Naive thymus-derived CD4-positive, alpha-beta T cell (primary cell): ENCODE measurements at regions of chr6 and their contacts with region 1.

Region 1: DNA sequence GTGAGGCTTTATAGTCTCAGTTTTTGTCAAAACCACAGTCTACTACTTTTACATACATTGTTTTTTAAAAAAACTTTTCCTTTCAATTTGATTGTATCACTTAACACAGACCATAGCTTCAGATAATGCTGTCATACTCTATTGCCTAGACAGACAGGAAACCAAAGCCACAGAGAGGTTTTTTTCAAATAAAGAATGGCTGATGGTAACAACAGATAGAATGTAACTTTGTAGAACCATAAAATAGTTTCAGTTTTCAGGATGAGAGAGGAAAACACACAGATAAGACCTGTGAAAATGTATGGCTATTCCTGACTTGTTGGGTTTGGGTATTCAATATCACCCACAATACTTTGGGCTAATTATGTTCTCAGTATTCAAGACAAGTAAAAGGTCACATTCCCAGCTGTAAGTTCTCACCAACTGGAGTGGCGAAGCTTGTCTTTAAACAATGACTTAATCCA is 94.0 kb downstream of the ADGRG6 start:
- DNase-seq: peak in 7 of 9 donors; percentile 72 to 90 (median 88)
- ATAC-seq: peak; percentile 97
- H3K4me3 ChIP-seq: peak overlapping the region; percentile 30
- H3K4me3 Mint-ChIP-seq: peak overlapping the region in 9 of 10 donors; percentile 47 to 78 (median 69)
- H3K27ac ChIP-seq: peak overlapping the region; percentile 80
- H3K27ac Mint-ChIP-seq: peak overlapping the region; percentile 9 to 99 (median 97)
- H3K4me1 ChIP-seq: peaks cover 9 to 33% of the 10 kb centered on the region in 2 donors
- H3K4me1 Mint-ChIP-seq: peaks cover 10 to 76% (median 61%) of the 10 kb centered on the region in 7 donors
- H3K27me3 ChIP-seq: no peaks in the 10 kb centered on the region
- H3K27me3 Mint-ChIP-seq: peaks cover 0 to 58% (median 0%) of the 10 kb centered on the region in 5 donors

Region 2: DNA sequence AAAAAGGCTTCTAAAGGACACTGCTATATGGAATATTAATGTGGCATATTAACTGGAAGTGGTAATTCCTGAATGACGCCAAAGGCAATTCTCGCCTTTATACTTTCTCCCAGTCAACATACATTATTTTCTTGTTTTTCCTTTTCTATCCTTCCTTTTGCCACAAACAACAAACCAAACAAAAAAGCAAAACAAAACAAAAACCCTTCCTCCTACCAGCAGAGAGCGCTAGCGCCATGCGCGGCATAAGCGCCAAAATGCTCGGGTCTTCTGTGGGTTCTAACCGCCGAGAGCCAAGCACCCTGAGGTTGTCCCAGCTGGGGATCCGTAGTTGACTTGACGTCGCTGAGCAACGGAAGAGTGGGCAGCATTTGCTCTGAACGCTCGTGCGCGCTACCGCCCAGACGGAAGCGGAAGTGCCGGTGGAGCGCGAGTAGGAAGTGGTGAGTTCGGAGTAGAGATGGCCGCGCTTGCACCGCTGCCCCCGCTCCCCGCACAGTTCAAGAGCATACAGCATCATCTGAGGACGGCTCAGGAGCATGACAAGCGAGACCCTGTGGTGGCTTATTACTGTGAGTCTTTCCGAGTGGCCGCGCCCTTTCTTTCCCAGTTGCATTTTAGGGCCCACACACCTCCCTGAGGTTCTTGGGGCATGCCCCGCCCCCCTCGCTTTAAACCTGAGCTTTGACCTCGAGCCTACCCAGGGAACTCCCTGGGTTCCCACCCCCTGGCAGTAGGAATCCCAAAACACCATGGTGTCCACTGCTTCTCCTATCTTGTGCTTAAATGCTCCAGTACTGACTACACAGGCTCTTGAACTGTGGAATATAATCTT is 248.8 kb before region 1 on chr6 and contains the starts of genes NMBR and VTA1:
- CTCF ChIA-PET with region 1: interaction called, 5 read pairs
- POLR2A ChIA-PET with region 1: interaction called, 4 read pairs
- intact Hi-C with region 1: loop called in 1 of 2 experiments (anchors 1 kb)
- DNase-seq: peak; percentile 81 to 98 (median 97)
- ATAC-seq: peak; percentile 99
- H3K4me3 ChIP-seq: peak within 1 kb of the TSS; percentile 95
- H3K4me3 Mint-ChIP-seq: peak within 1 kb of the TSS; percentile 88 to 98 (median 95)
- H3K27ac ChIP-seq: peak within 1 kb of the TSS; percentile 75
- H3K27ac Mint-ChIP-seq: peak within 1 kb of the TSS; percentile 80 to 98 (median 94)
- H3K4me1 ChIP-seq: peaks cover 22 to 25% of the 10 kb centered on the region in 2 donors
- H3K4me1 Mint-ChIP-seq: peaks cover 36 to 73% (median 65%) of the 10 kb centered on the region in 7 donors
- H3K27me3 ChIP-seq: no peaks in the 10 kb centered on the region
- H3K27me3 Mint-ChIP-seq: peaks cover 0 to 2% (median 0%) of the 10 kb centered on the region in 5 donors
- total RNA-seq, gene NMBR: not detected
- total RNA-seq, gene VTA1: 13.6 to 41.3 (median 32.6) TPM

Region 3: GRCh38 chr6:142429195-142429594 is 33.4 kb after region 1 on chr6:
- CTCF ChIA-PET with region 1: no interaction called
- POLR2A ChIA-PET with region 1: no interaction called
- intact Hi-C with region 1: no loop called
- DNase-seq: no peak
- ATAC-seq: no peak
- H3K4me3 ChIP-seq: no peak overlapping the region
- H3K4me3 Mint-ChIP-seq: no peak overlapping the region
- H3K27ac ChIP-seq: no peak overlapping the region
- H3K27ac Mint-ChIP-seq: no peak overlapping the region
- H3K4me1 ChIP-seq: no peaks in the 10 kb centered on the region
- H3K4me1 Mint-ChIP-seq: no peaks in the 10 kb centered on the region
- H3K27me3 ChIP-seq: no peaks in the 10 kb centered on the region
- H3K27me3 Mint-ChIP-seq: peaks cover 0 to 5% (median 0%) of the 10 kb centered on the region in 5 donors

Region 4: GRCh38 chr6:142444881-142445301 is 49.1 kb after region 1 on chr6:
- CTCF ChIA-PET with region 1: no interaction called
- POLR2A ChIA-PET with region 1: no interaction called
- intact Hi-C with region 1: loop called in 1 of 2 experiments (anchors 5 kb)
- DNase-seq: no peak
- ATAC-seq: no peak
- H3K4me3 ChIP-seq: no peak overlapping the region
- H3K4me3 Mint-ChIP-seq: no peak overlapping the region
- H3K27ac ChIP-seq: no peak overlapping the region
- H3K27ac Mint-ChIP-seq: no peak overlapping the region
- H3K4me1 ChIP-seq: no peaks in the 10 kb centered on the region
- H3K4me1 Mint-ChIP-seq: no peaks in the 10 kb centered on the region
- H3K27me3 ChIP-seq: no peaks in the 10 kb centered on the region
- H3K27me3 Mint-ChIP-seq: peaks cover 0 to 9% (median 0%) of the 10 kb centered on the region in 5 donors

Region 5: DNA sequence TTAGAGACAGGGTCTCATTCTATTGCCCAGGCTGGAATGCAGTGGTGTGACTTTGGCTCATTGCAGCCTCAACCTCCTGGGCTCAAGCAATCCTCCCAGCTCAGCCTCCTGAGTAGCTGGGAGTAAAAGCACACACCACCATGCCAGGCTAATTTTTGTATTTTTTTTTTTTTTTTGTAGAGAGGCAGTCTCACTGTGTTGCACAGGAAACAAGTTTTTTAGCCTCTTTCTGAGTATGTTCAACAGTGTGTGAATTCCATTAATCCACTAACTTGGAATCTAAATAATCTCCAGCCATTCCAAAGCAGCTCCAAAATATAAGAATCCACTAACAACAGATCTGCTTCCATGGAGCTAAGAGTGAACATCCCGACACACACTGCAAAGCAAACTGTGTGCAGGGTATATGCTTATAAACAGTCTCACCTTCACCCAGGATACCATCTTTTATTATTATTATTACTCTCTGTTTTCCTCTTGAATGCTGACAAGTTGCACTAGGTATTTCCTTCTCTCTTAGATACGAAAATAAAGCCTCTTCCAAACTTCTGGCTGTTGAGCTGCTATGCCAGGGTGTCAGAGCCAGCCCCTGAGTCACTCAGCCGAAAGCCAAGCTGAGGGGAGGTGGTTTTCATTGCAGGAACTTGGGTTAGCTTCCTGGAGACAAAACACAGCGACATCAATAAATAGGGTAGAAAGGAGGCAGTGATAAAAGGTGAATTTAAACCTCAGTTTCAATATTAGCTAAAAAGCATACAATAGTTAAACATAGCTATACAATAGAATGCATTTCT is 284.3 kb after region 1 on chr6:
- CTCF ChIA-PET with region 1: no interaction called
- POLR2A ChIA-PET with region 1: no interaction called
- intact Hi-C with region 1: loop called (anchors 5 kb)
- DNase-seq: peak in 6 of 9 donors; percentile 24 to 59 (median 44)
- ATAC-seq: peak; percentile 85
- H3K4me3 ChIP-seq: no peak overlapping the region
- H3K4me3 Mint-ChIP-seq: peak overlapping the region in 9 of 10 donors; percentile 54 to 85 (median 74)
- H3K27ac ChIP-seq: no peak overlapping the region
- H3K27ac Mint-ChIP-seq: peak overlapping the region in 8 of 9 donors; percentile 14 to 94 (median 76)
- H3K4me1 ChIP-seq: peaks cover 0 to 27% of the 10 kb centered on the region in 2 donors
- H3K4me1 Mint-ChIP-seq: peaks cover 6 to 64% (median 55%) of the 10 kb centered on the region in 7 donors
- H3K27me3 ChIP-seq: no peaks in the 10 kb centered on the region
- H3K27me3 Mint-ChIP-seq: no peaks in the 10 kb centered on the region

Region 6: DNA sequence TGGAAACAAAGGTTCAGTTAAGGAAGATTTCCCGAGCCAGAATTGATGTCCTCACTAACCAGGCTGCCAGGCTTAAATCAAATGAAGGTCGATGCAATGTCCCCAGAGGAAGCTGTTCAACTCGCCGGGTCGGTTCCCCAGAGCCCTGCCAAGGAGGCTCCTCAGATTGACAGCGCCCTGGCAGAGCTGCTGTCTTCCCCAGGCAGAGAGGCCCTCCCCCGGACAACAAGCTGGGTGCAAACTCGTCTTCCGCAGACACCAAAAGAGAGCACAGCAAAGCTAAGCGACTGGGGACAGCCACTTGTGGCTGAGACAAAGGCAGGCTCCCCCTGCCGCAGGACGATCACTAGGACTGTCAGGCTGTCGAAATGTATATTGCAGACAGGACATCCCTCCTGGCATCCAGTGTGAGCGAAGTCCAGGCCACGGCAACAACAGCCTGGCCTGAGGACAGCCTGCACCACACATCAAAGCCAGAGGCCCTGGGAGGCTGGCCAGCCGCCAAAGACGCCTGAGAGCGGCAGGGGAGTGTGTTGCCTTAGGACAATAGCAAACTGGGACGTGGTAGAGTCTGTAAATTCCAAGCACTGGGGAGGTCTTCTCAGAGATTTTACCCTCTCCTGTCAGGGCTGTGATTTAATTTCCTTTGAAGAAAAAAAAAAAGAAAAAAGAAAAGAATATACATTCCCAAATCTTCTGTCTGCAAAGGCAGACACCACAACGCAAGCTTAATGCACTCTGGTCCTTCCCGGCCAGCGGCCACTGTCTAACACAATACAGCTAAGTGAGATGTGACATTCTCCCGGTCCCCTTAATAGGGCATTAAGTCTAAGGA is 450.0 kb after region 1 on chr6:
- CTCF ChIA-PET with region 1: no interaction called
- POLR2A ChIA-PET with region 1: no interaction called
- intact Hi-C with region 1: loop called in 1 of 2 experiments (anchors 5 kb)
- DNase-seq: peak; percentile 27 to 70 (median 63)
- ATAC-seq: peak; percentile 72
- H3K4me3 ChIP-seq: peak overlapping the region; percentile 44
- H3K4me3 Mint-ChIP-seq: peak overlapping the region; percentile 84 to 93 (median 86)
- H3K27ac ChIP-seq: peak overlapping the region; percentile 84
- H3K27ac Mint-ChIP-seq: peak overlapping the region; percentile 91 to 100 (median 95)
- H3K4me1 ChIP-seq: peaks cover 69 to 74% of the 10 kb centered on the region in 2 donors
- H3K4me1 Mint-ChIP-seq: peaks cover 49 to 99% (median 86%) of the 10 kb centered on the region in 7 donors
- H3K27me3 ChIP-seq: no peaks in the 10 kb centered on the region
- H3K27me3 Mint-ChIP-seq: no peaks in the 10 kb centered on the region

Region 7: DNA sequence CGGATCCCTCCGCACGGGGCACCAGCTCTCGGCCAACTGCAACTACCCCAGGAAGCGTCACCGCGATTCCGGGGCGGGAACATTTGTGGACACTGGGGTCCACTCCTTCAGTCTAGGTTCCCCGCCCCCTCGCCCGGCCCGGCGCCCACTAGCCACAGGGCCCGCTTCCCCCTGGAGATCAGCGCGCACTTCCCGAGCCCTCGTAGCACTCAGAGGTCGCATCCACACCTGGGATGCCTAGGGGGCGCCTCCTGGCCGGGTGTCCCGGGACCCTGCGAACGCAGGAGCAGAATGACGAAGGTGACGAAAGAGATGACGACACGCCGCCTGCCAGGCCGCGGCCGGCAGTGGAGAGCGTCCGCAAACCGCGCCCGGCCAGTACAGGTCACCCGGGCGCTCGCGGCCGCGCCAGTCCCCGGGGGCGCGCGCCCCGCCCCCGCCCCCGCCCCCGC is 664.6 kb after region 1 on chr6:
- CTCF ChIA-PET with region 1: no interaction called
- POLR2A ChIA-PET with region 1: no interaction called
- intact Hi-C with region 1: loop called (anchors 5 kb)
- DNase-seq: peak; percentile 63 to 82 (median 72)
- ATAC-seq: peak; percentile 85
- H3K4me3 ChIP-seq: peak overlapping the region; percentile 73
- H3K4me3 Mint-ChIP-seq: peak overlapping the region; percentile 88 to 98 (median 94)
- H3K27ac ChIP-seq: peak overlapping the region; percentile 79
- H3K27ac Mint-ChIP-seq: peak overlapping the region; percentile 92 to 98 (median 96)
- H3K4me1 ChIP-seq: peaks cover 8% of the 10 kb centered on the region in 2 donors
- H3K4me1 Mint-ChIP-seq: peaks cover 16 to 34% (median 28%) of the 10 kb centered on the region in 7 donors
- H3K27me3 ChIP-seq: no peaks in the 10 kb centered on the region
- H3K27me3 Mint-ChIP-seq: no peaks in the 10 kb centered on the region

Region 8: DNA sequence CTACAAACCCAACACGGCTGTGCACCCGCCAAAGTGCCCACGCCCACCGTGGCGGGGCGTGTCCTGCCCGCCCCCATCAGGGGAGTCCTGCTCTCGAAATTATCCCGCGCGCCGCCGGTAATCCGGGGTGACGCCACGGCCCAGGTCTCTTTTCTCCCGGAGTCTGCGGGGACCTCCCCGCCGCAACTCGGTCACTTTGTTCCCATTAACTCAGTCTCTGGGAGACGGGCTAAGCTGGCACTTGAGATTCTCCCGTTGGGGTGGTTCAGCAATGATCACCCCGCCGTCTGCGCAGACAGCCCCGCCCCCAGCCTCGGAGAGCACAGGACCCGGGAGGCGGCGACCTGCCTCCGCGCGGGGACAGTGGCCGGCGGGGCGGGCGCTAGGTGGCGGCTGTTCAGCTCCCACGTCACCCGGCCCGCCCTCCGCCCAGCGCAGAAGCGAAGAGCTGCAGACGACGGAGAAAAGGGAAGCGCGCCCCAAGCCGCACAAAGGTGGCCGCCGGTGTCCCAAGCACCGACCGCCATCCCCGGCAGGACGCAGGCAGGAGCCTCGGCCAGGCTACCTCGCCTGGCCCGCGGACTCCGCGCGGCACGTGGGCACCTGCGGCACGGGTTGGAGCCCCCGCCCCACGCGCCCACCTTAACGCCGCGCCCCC is 1668.1 kb after region 1 on chr6:
- CTCF ChIA-PET with region 1: no interaction called
- POLR2A ChIA-PET with region 1: no interaction called
- intact Hi-C with region 1: loop called in 1 of 2 experiments (anchors 5 kb)
- DNase-seq: peak; percentile 84 to 91 (median 88)
- ATAC-seq: peak; percentile 96
- H3K4me3 ChIP-seq: peak overlapping the region; percentile 56
- H3K4me3 Mint-ChIP-seq: peak overlapping the region; percentile 87 to 94 (median 91)
- H3K27ac ChIP-seq: peak overlapping the region; percentile 85
- H3K27ac Mint-ChIP-seq: peak overlapping the region; percentile 83 to 97 (median 88)
- H3K4me1 ChIP-seq: peaks cover 0 to 12% of the 10 kb centered on the region in 2 donors
- H3K4me1 Mint-ChIP-seq: peaks cover 17 to 44% (median 29%) of the 10 kb centered on the region in 7 donors
- H3K27me3 ChIP-seq: no peaks in the 10 kb centered on the region
- H3K27me3 Mint-ChIP-seq: peaks cover 0 to 2% (median 0%) of the 10 kb centered on the region in 5 donors